CD14-positive monocyte (primary cell): ENCODE measurements at regions of chr9 and their contacts with region 1.

Region 1: GRCh38 chr9:3525836-3526164 is at the start of gene RFX3:
- DNase-seq: peak; percentile 93 to 95 (median 95)
- H3K4me3 ChIP-seq: peak within 1 kb of the TSS; percentile 72 to 84 (median 80)
- H3K4me3 Mint-ChIP-seq: peak within 1 kb of the TSS; percentile 94 to 98
- H3K27ac ChIP-seq: peak within 1 kb of the TSS; percentile 99 to 100
- H3K27ac Mint-ChIP-seq: peak within 1 kb of the TSS; percentile 99 to 100 (median 100)
- H3K4me1 ChIP-seq: peaks cover 24 to 45% of the 10 kb centered on the region in 2 donors
- H3K4me1 Mint-ChIP-seq: peaks cover 40% of the 10 kb centered on the region
- H3K27me3 ChIP-seq: no peaks in the 10 kb centered on the region
- H3K27me3 Mint-ChIP-seq: peaks cover 0 to 4% (median 3%) of the 10 kb centered on the region in 3 donors
- CTCF ChIP-seq: no peak
- polyA plus RNA-seq, gene RFX3: 1.7 to 5.2 (median 3.2) TPM

Region 2: DNA sequence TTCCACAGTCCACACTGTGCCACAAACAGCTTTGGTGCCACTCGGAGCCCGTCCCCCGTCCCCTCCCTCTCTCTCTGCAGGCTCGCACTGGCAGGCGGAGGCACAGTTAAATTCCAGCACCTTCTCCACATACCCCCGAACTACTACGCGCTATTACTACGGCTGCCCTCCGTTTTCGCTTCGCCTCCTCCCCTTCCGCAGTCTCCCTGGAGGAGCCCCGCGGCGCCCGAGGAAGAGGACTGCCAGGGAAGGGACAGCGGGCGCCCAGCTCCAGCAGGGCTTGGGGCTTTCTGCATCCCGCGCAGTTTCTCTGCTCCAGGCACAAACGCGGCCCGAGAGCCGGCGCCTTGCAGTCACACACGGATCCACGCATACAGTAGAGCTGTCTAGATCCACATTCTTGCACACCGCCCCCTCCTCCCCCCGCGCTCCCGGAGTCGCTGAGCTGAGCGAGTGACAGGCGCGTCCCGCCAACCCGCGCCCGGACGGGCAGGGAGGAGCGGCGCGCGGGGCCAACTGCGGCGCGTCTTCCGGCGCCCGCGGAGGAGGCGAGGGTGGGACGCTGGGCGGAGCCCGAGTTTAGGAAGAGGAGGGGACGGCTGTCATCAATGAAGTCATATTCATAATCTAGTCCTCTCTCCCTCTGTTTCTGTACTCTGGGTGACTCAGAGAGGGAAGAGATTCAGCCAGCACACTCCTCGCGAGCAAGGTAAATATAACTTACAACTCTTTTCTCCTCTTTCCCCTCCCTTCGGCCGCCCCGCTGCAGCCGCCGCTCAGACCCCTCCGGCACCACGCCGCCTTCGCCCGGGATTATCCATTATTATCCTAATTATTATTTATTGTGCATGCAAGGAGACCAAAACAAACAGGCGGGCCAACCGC is 1510.9 kb before region 1 on chr9 and contains the start of gene SMARCA2:
- intact Hi-C with region 1: loop called (anchors 10 kb)
- DNase-seq: peak; percentile 96
- H3K4me3 ChIP-seq: peak within 1 kb of the TSS; percentile 76 to 98 (median 96)
- H3K4me3 Mint-ChIP-seq: peak within 1 kb of the TSS; percentile 97 to 98
- H3K27ac ChIP-seq: peak within 1 kb of the TSS; percentile 90 to 97
- H3K27ac Mint-ChIP-seq: peak within 1 kb of the TSS; percentile 94 to 98 (median 97)
- H3K4me1 ChIP-seq: peaks cover 23 to 31% of the 10 kb centered on the region in 2 donors
- H3K4me1 Mint-ChIP-seq: peaks cover 29% of the 10 kb centered on the region
- H3K27me3 ChIP-seq: no peaks in the 10 kb centered on the region
- H3K27me3 Mint-ChIP-seq: peaks cover 1 to 3% (median 3%) of the 10 kb centered on the region in 3 donors
- CTCF ChIP-seq: no peak
- polyA plus RNA-seq, gene SMARCA2: 11.0 to 54.7 (median 11.8) TPM

Region 3: DNA sequence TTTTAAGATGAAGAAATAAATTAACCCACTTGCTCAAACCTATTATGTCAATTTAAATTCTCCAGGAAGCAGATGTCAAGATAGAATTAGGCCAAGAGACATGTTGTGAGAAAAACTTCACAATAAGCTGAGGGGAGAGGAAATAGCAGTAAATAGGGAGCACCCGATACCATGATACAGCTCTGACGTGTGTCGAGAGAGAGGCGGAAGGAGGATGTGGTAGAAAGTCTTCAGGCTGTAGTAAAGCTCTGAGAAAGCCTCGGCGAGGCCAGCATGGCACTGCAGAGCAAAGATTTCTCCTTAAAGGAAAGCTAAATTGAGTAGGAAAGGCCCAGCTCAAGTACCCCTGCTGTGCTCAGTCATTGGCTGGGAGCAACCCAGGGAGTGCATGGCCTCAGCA is 675.9 kb before region 1 on chr9:
- intact Hi-C with region 1: loop called in 1 of 2 experiments (anchors 10 kb)
- DNase-seq: no peak
- H3K4me3 ChIP-seq: no peak overlapping the region
- H3K4me3 Mint-ChIP-seq: no peak overlapping the region
- H3K27ac ChIP-seq: no peak overlapping the region
- H3K27ac Mint-ChIP-seq: no peak overlapping the region
- H3K4me1 ChIP-seq: peaks cover 2 to 4% of the 10 kb centered on the region in 2 donors
- H3K4me1 Mint-ChIP-seq: peaks cover 4% of the 10 kb centered on the region
- H3K27me3 ChIP-seq: peaks cover 0 to 2% of the 10 kb centered on the region in 2 donors
- H3K27me3 Mint-ChIP-seq: peaks cover 2 to 9% (median 3%) of the 10 kb centered on the region in 3 donors
- CTCF ChIP-seq: no peak

Region 4: GRCh38 chr9:3576328-3576727 is 50.5 kb after region 1 on chr9:
- intact Hi-C with region 1: loop called in 1 of 2 experiments (anchors 2 kb)
- DNase-seq: peak; percentile 76 to 90 (median 86)
- H3K4me3 ChIP-seq: peak overlapping the region in 2 of 3 experiments; percentile 11 to 26
- H3K4me3 Mint-ChIP-seq: peak overlapping the region in 1 of 2 donors; percentile 39
- H3K27ac ChIP-seq: peak overlapping the region in 1 of 2 donors; percentile 28
- H3K27ac Mint-ChIP-seq: peak overlapping the region; percentile 67 to 90 (median 84)
- H3K4me1 ChIP-seq: peaks cover 18 to 32% of the 10 kb centered on the region in 2 donors
- H3K4me1 Mint-ChIP-seq: peaks cover 22% of the 10 kb centered on the region
- H3K27me3 ChIP-seq: no peaks in the 10 kb centered on the region
- H3K27me3 Mint-ChIP-seq: peaks cover 0 to 2% (median 0%) of the 10 kb centered on the region in 3 donors
- CTCF ChIP-seq: peak; percentile 24

Region 5: GRCh38 chr9:3916984-3917383 is 391.2 kb after region 1 on chr9:
- intact Hi-C with region 1: no loop called
- DNase-seq: no peak
- H3K4me3 ChIP-seq: no peak overlapping the region
- H3K4me3 Mint-ChIP-seq: no peak overlapping the region
- H3K27ac ChIP-seq: no peak overlapping the region
- H3K27ac Mint-ChIP-seq: no peak overlapping the region
- H3K4me1 ChIP-seq: no peaks in the 10 kb centered on the region
- H3K4me1 Mint-ChIP-seq: no peaks in the 10 kb centered on the region
- H3K27me3 ChIP-seq: no peaks in the 10 kb centered on the region
- H3K27me3 Mint-ChIP-seq: no peaks in the 10 kb centered on the region
- CTCF ChIP-seq: no peak